ENCODE measurements at regions of chr1 and their contacts with region 1.

Region 1: GRCh38 chr1:161159087-161159912 is at the start of gene USP21:
- DNase-seq: peak; percentile 94 to 96 (median 94)
- ATAC-seq: peak; percentile 91
- H3K4me3 ChIP-seq: peak within 1 kb of the TSS; percentile 75
- H3K27ac ChIP-seq: peak within 1 kb of the TSS; percentile 72
- H3K4me1 ChIP-seq: peaks cover 50 to 62% of the 10 kb centered on the region in 2 experiments
- H3K27me3 ChIP-seq: no peaks in the 10 kb centered on the region
- CTCF ChIP-seq: peak; percentile 25 to 62 (median 29); a peak in 5 of 6 replicates
- EP300 ChIP-seq: 0 out of 2 replicates have a peak, but pooled peaks have one; percentile 17
- POLR2A ChIP-seq: peak; percentile 80
- RAD21 ChIP-seq: no peak
- polyA plus RNA-seq, gene USP21: 14.7 to 14.8 TPM

Region 2: GRCh38 chr1:160868141-160868540 is 291.2 kb before region 1 on chr1:
- CTCF ChIA-PET with region 1: no interaction called
- POLR2A ChIA-PET with region 1: no interaction called
- in situ Hi-C with region 1: no loop called
- intact Hi-C with region 1: no loop called
- DNase-seq: no peak
- ATAC-seq: no peak
- H3K4me3 ChIP-seq: no peak overlapping the region
- H3K27ac ChIP-seq: no peak overlapping the region
- H3K4me1 ChIP-seq: no peaks in the 10 kb centered on the region
- H3K27me3 ChIP-seq: peaks cover 2 to 7% of the 10 kb centered on the region in 2 experiments; a peak in 3 of 5 replicates
- CTCF ChIP-seq: no peak
- EP300 ChIP-seq: no peak
- POLR2A ChIP-seq: no peak
- RAD21 ChIP-seq: no peak

Region 3: DNA sequence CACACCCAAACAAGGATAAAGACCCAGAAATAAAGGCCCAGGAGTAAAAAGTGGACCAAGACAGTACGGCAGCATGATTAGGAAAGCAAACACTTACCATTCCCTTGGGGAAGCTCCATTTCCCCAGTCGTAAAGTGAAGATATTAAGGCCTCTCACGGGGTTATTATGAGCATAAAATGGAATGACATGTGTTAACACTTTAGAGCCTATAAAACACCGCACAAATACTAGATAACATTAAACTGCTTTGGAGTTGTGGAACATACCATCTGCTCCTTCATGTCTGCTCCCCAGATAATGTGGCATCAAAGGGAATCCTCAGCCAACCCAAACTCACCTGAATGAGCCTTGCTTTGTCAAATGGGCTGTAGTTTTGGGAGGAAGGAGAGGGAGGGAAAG is 195.8 kb before region 1 on chr1:
- CTCF ChIA-PET with region 1: no interaction called
- POLR2A ChIA-PET with region 1: no interaction called
- in situ Hi-C with region 1: no loop called
- intact Hi-C with region 1: no loop called
- DNase-seq: no peak
- ATAC-seq: no peak
- H3K4me3 ChIP-seq: no peak overlapping the region
- H3K27ac ChIP-seq: no peak overlapping the region
- H3K4me1 ChIP-seq: no peaks in the 10 kb centered on the region
- H3K27me3 ChIP-seq: peaks cover 4 to 9% of the 10 kb centered on the region in 2 experiments; a peak in 4 of 5 replicates
- CTCF ChIP-seq: no peak
- EP300 ChIP-seq: no peak
- POLR2A ChIP-seq: no peak
- RAD21 ChIP-seq: no peak

Region 4: GRCh38 chr1:161171191-161171590 is 11.9 kb after region 1 on chr1:
- CTCF ChIA-PET with region 1: no interaction called
- POLR2A ChIA-PET with region 1: interaction called, 30 read pairs
- in situ Hi-C with region 1: no loop called
- intact Hi-C with region 1: loop called (anchors 2 kb)
- DNase-seq: peak in 1 of 4 experiments; percentile 14
- ATAC-seq: no peak
- H3K4me3 ChIP-seq: no peak overlapping the region
- H3K27ac ChIP-seq: no peak overlapping the region
- H3K4me1 ChIP-seq: peaks cover 15 to 45% of the 10 kb centered on the region in 2 experiments; a peak in 4 of 5 replicates
- H3K27me3 ChIP-seq: no peaks in the 10 kb centered on the region
- CTCF ChIP-seq: peak; percentile 41 to 48 (median 42); a peak in 5 of 6 replicates
- EP300 ChIP-seq: no peak
- POLR2A ChIP-seq: no peak
- RAD21 ChIP-seq: no peak

Region 5: GRCh38 chr1:161382214-161383019 is 223.1 kb after region 1 on chr1:
- CTCF ChIA-PET with region 1: no interaction called
- POLR2A ChIA-PET with region 1: no interaction called
- in situ Hi-C with region 1: no loop called
- intact Hi-C with region 1: no loop called
- DNase-seq: peak; percentile 28 to 70 (median 41)
- ATAC-seq: peak; percentile 93
- H3K4me3 ChIP-seq: no peak overlapping the region
- H3K27ac ChIP-seq: no peak overlapping the region
- H3K4me1 ChIP-seq: peaks cover 0 to 6% of the 10 kb centered on the region in 2 experiments; a peak in 3 of 5 replicates
- H3K27me3 ChIP-seq: no peaks in the 10 kb centered on the region
- CTCF ChIP-seq: peak; percentile 55 to 78 (median 58); a peak in 5 of 6 replicates
- EP300 ChIP-seq: no peak
- POLR2A ChIP-seq: no peak
- RAD21 ChIP-seq: peak; percentile 75 to 84

Measured in K562 (cell line).